PC-9 (cell line): ENCODE measurements at regions of chr4 and their contacts with region 1.

Region 1: GRCh38 chr4:11949355-11949754 is 520.7 kb upstream of the HS3ST1 start:
- DNase-seq: no peak
- H3K4me3 ChIP-seq: no peak overlapping the region
- H3K27ac ChIP-seq: no peak overlapping the region
- H3K4me1 ChIP-seq: no peaks in the 10 kb centered on the region
- H3K27me3 ChIP-seq: no peaks in the 10 kb centered on the region
- CTCF ChIP-seq: no peak

Region 2: DNA sequence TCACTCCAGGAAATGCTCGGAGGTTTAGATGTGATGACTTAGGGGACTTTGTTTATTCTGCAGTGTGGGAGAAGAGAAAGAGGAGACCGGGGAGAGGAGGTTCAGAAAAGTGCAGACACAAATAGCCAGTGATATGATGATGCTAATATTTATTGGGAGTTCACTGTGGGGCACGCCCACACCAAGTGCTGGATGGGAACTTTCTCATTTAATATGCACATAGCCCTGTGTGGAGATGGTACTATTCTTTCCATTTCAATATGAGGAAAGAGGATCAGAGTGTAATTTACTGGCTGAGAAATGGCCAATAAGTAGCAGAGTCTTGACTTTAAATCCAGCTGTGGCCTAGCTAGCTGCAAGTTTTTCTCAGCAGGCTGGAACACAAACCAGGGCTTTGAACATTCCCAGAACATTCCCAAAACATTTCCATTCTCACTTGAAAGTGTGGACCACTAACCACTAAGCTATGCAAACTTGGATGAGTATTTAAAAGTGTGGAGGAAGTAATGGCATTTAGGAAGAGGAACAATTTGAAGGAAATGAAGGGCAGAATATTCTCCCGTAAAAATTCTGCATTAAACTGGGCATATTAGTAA is 752.3 kb before region 1 on chr4:
- CTCF ChIA-PET with region 1: no interaction called
- POLR2A ChIA-PET with region 1: no interaction called
- intact Hi-C with region 1: loop called (anchors 10 kb)
- DNase-seq: no peak
- H3K4me3 ChIP-seq: no peak overlapping the region
- H3K27ac ChIP-seq: no peak overlapping the region
- H3K4me1 ChIP-seq: no peaks in the 10 kb centered on the region
- H3K27me3 ChIP-seq: no peaks in the 10 kb centered on the region
- CTCF ChIP-seq: no peak

Region 3: GRCh38 chr4:11741190-11741652 is 208.1 kb before region 1 on chr4:
- CTCF ChIA-PET with region 1: no interaction called
- POLR2A ChIA-PET with region 1: interaction called, 17 read pairs
- intact Hi-C with region 1: no loop called
- DNase-seq: peak in 1 of 2 experiments; percentile 64
- H3K4me3 ChIP-seq: no peak overlapping the region
- H3K27ac ChIP-seq: 0 out of 2 replicates have a peak overlapping the region, but pooled peaks have one; percentile 27
- H3K4me1 ChIP-seq: peaks cover 13% of the 10 kb centered on the region; the same call in 1 of the 2 replicates
- H3K27me3 ChIP-seq: no peaks in the 10 kb centered on the region
- CTCF ChIP-seq: no peak